ENCODE measurements at regions of chr7 and their contacts with region 1.

Region 1: GRCh38 chr7:111741811-111742240 is 179.5 kb upstream of the IMMP2L start:
- DNase-seq: peak in 6 of 9 experiments; percentile 3 to 68 (median 36)
- ATAC-seq: peak; percentile 82
- H3K4me3 ChIP-seq: no peak overlapping the region
- H3K4me3 Mint-ChIP-seq: no peak overlapping the region
- H3K27ac ChIP-seq: no peak overlapping the region
- H3K27ac Mint-ChIP-seq: no peak overlapping the region
- H3K4me1 ChIP-seq: no peaks in the 10 kb centered on the region
- H3K4me1 Mint-ChIP-seq: peaks cover 3% of the 10 kb centered on the region
- H3K27me3 ChIP-seq: no peaks in the 10 kb centered on the region
- H3K27me3 Mint-ChIP-seq: peaks cover 2% of the 10 kb centered on the region
- CTCF ChIP-seq: peak; percentile 70

Region 2: GRCh38 chr7:111752022-111752582 is 10.3 kb after region 1 on chr7:
- CTCF ChIA-PET with region 1: interaction called, 13 read pairs
- POLR2A ChIA-PET with region 1: no interaction called
- intact Hi-C with region 1: no loop called
- DNase-seq: peak; percentile 8 to 60 (median 46)
- ATAC-seq: peak; percentile 68
- H3K4me3 ChIP-seq: no peak overlapping the region
- H3K4me3 Mint-ChIP-seq: no peak overlapping the region
- H3K27ac ChIP-seq: no peak overlapping the region
- H3K27ac Mint-ChIP-seq: no peak overlapping the region
- H3K4me1 ChIP-seq: no peaks in the 10 kb centered on the region
- H3K4me1 Mint-ChIP-seq: no peaks in the 10 kb centered on the region
- H3K27me3 ChIP-seq: no peaks in the 10 kb centered on the region
- H3K27me3 Mint-ChIP-seq: peaks cover 15% of the 10 kb centered on the region
- CTCF ChIP-seq: peak; percentile 69

Region 3: GRCh38 chr7:112495810-112496462 is 754.1 kb after region 1 on chr7:
- CTCF ChIA-PET with region 1: interaction called, 45 read pairs
- POLR2A ChIA-PET with region 1: no interaction called
- intact Hi-C with region 1: loop called (anchors 1 kb)
- DNase-seq: peak in 6 of 9 experiments; percentile 2 to 54 (median 28)
- ATAC-seq: peak; percentile 34
- H3K4me3 ChIP-seq: no peak overlapping the region
- H3K4me3 Mint-ChIP-seq: no peak overlapping the region
- H3K27ac ChIP-seq: no peak overlapping the region
- H3K27ac Mint-ChIP-seq: no peak overlapping the region
- H3K4me1 ChIP-seq: no peaks in the 10 kb centered on the region
- H3K4me1 Mint-ChIP-seq: no peaks in the 10 kb centered on the region
- H3K27me3 ChIP-seq: no peaks in the 10 kb centered on the region
- H3K27me3 Mint-ChIP-seq: peaks cover 2% of the 10 kb centered on the region
- CTCF ChIP-seq: peak; percentile 57

Region 4: GRCh38 chr7:112898432-112899290 is 1156.8 kb after region 1 on chr7:
- CTCF ChIA-PET with region 1: no interaction called
- POLR2A ChIA-PET with region 1: no interaction called
- intact Hi-C with region 1: loop called in 1 of 2 experiments (anchors 2 kb)
- DNase-seq: peak in 4 of 9 experiments; percentile 22 to 62 (median 39)
- ATAC-seq: peak; percentile 42
- H3K4me3 ChIP-seq: no peak overlapping the region
- H3K4me3 Mint-ChIP-seq: no peak overlapping the region
- H3K27ac ChIP-seq: no peak overlapping the region
- H3K27ac Mint-ChIP-seq: no peak overlapping the region
- H3K4me1 ChIP-seq: no peaks in the 10 kb centered on the region
- H3K4me1 Mint-ChIP-seq: peaks cover 12% of the 10 kb centered on the region
- H3K27me3 ChIP-seq: no peaks in the 10 kb centered on the region
- H3K27me3 Mint-ChIP-seq: no peaks in the 10 kb centered on the region
- CTCF ChIP-seq: peak; percentile 57

Region 5: GRCh38 chr7:113710310-113711106 is 1968.7 kb after region 1 on chr7:
- CTCF ChIA-PET with region 1: no interaction called
- POLR2A ChIA-PET with region 1: no interaction called
- intact Hi-C with region 1: loop called in 1 of 2 experiments (anchors 2 kb)
- DNase-seq: peak in 5 of 9 experiments; percentile 5 to 68 (median 40)
- ATAC-seq: peak; percentile 65
- H3K4me3 ChIP-seq: no peak overlapping the region
- H3K4me3 Mint-ChIP-seq: no peak overlapping the region
- H3K27ac ChIP-seq: no peak overlapping the region
- H3K27ac Mint-ChIP-seq: no peak overlapping the region
- H3K4me1 ChIP-seq: no peaks in the 10 kb centered on the region
- H3K4me1 Mint-ChIP-seq: no peaks in the 10 kb centered on the region
- H3K27me3 ChIP-seq: no peaks in the 10 kb centered on the region
- H3K27me3 Mint-ChIP-seq: no peaks in the 10 kb centered on the region
- CTCF ChIP-seq: peak; percentile 99